OCI-LY7 (cell line): ENCODE measurements at regions of chr3 and their contacts with region 1.

Region 1: DNA sequence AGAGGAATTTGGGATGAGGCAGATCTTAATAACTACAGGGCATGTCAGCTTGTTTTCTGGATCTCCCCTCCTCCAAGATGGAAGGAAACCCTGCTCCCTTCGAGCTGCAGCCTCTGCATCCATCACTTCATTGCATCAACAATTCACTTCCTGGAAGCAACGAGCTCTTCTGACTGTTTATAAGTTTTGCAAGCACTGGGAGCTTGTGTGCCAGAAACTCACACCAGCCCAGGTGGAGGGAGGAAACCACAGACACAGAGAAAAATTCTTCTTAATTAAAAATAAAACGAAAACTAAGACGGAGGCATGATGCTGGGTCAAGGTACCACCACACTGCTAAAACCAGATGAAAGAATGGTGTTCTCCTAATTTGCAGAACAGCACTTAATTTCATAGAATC is 10.6 kb downstream of the LRIG1 start:
- DNase-seq: peak; percentile 83
- H3K4me3 ChIP-seq: peak overlapping the region; percentile 98
- H3K27ac ChIP-seq: peak overlapping the region; percentile 97
- H3K4me1 ChIP-seq: peaks cover 99% of the 10 kb centered on the region
- CTCF ChIP-seq: no peak

Region 2: GRCh38 chr3:66121318-66121717 is 368.9 kb before region 1 on chr3:
- CTCF ChIA-PET with region 1: no interaction called
- POLR2A ChIA-PET with region 1: no interaction called
- intact Hi-C with region 1: no loop called
- DNase-seq: no peak
- H3K4me3 ChIP-seq: no peak overlapping the region
- H3K27ac ChIP-seq: no peak overlapping the region
- H3K4me1 ChIP-seq: no peaks in the 10 kb centered on the region
- CTCF ChIP-seq: no peak

Region 3: GRCh38 chr3:66400411-66401156 is 89.6 kb before region 1 on chr3:
- CTCF ChIA-PET with region 1: no interaction called
- POLR2A ChIA-PET with region 1: no interaction called
- intact Hi-C with region 1: no loop called
- DNase-seq: no peak
- H3K4me3 ChIP-seq: no peak overlapping the region
- H3K27ac ChIP-seq: no peak overlapping the region
- H3K4me1 ChIP-seq: no peaks in the 10 kb centered on the region
- CTCF ChIP-seq: no peak

Region 4: DNA sequence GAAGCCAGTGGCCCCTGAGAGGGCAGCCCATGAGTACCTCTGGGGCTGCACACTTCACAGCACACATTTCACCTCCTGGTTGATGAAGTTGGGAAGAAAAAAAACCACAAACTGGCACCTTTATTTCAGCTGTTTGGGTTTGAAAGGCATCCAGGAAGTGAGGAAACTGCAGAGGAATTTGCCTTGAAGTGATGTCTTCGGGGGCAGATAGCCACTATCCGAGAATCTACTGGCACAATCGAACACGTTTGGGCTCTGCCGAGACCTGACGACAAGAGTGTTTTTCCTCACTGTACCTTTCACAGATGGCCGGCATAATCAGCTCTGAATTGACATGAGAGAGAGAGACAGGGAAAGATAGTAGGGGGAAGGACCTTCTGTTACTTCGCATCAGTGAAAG is 49.1 kb before region 1 on chr3:
- CTCF ChIA-PET with region 1: no interaction called
- POLR2A ChIA-PET with region 1: interaction called, 10 read pairs
- intact Hi-C with region 1: no loop called
- DNase-seq: no peak
- H3K4me3 ChIP-seq: no peak overlapping the region
- H3K27ac ChIP-seq: peak overlapping the region; percentile 50
- H3K4me1 ChIP-seq: peaks cover 34% of the 10 kb centered on the region
- CTCF ChIP-seq: no peak

Region 5: DNA sequence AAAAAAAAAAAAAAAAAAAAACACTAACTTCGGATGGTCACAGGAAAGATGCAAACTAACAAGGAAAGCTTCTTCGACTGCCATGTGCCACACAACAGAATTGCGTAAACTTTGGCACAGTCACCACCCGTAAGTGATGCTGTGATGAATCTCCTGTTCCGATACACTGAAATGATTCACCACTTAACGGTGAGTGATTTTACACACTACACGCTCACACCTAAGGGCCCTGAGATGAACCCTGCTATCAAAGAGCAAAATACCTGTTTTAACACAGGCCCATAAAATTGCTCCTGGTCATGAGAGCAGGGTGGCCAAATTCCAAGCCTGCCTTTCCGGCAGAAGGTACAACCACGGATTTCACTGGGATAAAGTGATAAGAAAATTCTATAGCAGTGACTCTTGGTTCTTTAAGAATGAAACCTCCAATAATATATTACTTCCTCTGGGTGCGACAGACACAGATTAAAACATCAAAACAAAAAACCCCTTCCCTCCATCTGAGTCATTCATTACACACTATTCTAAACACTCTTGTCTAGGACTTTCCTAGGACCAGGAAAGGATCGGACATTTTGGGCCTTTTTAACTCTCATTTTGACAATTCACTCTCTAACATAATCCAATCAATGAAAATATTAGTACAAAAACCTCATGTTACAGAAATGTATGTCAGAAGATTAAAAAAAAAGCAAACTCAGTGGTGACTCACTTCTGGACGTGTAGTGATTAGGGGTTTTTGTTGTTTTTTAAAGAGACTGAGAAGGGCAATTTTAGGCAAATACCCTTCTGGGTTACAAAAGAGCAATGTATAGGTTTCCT is 17.7 kb before region 1 on chr3:
- CTCF ChIA-PET with region 1: interaction called, 7 read pairs
- POLR2A ChIA-PET with region 1: interaction called, 74 read pairs
- intact Hi-C with region 1: no loop called
- DNase-seq: no peak
- H3K4me3 ChIP-seq: peak overlapping the region; percentile 49
- H3K27ac ChIP-seq: peak overlapping the region; percentile 13
- H3K4me1 ChIP-seq: peaks cover 85% of the 10 kb centered on the region
- CTCF ChIP-seq: no peak